ENCODE measurements at regions of chr13 and their contacts with region 1.

Region 1: GRCh38 chr13:112641456-112642089 is 48.3 kb upstream of the ATP11A start:
- DNase-seq: no peak
- H3K4me3 ChIP-seq: no peak overlapping the region
- H3K27ac ChIP-seq: no peak overlapping the region
- H3K4me1 ChIP-seq: peaks cover 0 to 6% of the 10 kb centered on the region in 2 donors
- H3K27me3 ChIP-seq: no peaks in the 10 kb centered on the region
- CTCF ChIP-seq: no peak
- POLR2A ChIP-seq: no peak

Region 2: DNA sequence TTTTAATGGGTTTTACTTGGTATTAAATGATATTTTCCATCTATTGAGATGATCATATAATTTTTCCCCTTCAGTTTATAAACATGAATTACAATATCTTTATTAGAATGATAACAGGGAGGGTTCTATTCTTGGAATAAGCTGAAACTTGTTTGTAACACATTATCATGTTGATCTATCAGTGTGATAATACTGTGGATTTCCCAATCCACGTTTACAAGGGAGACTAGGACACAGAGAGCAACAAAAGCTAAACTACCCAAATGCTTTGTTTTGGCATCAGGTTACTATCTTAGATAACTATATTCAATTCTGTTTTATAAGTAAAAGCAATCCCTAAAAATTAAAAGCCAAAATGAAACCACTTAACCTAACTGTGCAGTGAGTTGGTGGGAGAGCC is 146.1 kb before region 1 on chr13:
- intact Hi-C with region 1: no loop called
- DNase-seq: no peak
- H3K4me3 ChIP-seq: no peak overlapping the region
- H3K27ac ChIP-seq: no peak overlapping the region
- H3K4me1 ChIP-seq: no peaks in the 10 kb centered on the region
- H3K27me3 ChIP-seq: no peaks in the 10 kb centered on the region
- CTCF ChIP-seq: no peak
- POLR2A ChIP-seq: no peak

Region 3: DNA sequence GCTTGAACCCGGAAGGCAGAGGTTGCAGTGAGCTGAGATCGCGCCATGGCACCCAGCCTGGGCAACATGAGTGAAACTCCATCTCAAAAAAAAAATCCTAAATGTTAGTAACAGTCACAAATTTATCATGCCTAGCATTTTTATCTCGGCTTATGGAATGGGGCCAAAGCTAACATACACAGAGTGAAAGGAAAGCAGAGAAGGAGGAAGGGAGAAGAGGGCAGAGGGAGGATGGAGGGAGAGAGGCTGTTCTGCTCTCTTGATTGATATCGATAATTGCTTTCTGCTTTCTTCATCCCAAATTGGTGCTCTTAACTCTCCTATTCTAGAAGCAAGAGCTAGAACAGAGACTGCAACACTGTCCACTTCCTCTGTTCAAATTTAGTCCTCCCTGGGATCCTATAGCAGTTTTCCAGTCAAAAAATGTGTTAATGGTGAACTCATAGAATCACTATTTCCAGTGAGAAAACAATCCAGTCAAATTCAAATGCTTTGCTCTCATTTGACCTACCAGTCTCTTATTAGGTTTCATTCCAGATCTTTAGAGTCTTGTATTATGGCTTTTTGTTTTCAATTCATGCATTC is 37.8 kb before region 1 on chr13:
- intact Hi-C with region 1: no loop called
- DNase-seq: no peak
- H3K4me3 ChIP-seq: no peak overlapping the region
- H3K27ac ChIP-seq: no peak overlapping the region
- H3K4me1 ChIP-seq: peaks cover 0 to 5% of the 10 kb centered on the region in 2 donors
- H3K27me3 ChIP-seq: no peaks in the 10 kb centered on the region
- CTCF ChIP-seq: no peak
- POLR2A ChIP-seq: no peak

Region 4: GRCh38 chr13:112685891-112686290 is 44.3 kb after region 1 on chr13:
- intact Hi-C with region 1: no loop called
- DNase-seq: no peak
- H3K4me3 ChIP-seq: no peak overlapping the region
- H3K27ac ChIP-seq: no peak overlapping the region
- H3K4me1 ChIP-seq: peaks cover 8 to 19% of the 10 kb centered on the region in 2 donors
- H3K27me3 ChIP-seq: no peaks in the 10 kb centered on the region
- CTCF ChIP-seq: no peak
- POLR2A ChIP-seq: no peak

Region 5: DNA sequence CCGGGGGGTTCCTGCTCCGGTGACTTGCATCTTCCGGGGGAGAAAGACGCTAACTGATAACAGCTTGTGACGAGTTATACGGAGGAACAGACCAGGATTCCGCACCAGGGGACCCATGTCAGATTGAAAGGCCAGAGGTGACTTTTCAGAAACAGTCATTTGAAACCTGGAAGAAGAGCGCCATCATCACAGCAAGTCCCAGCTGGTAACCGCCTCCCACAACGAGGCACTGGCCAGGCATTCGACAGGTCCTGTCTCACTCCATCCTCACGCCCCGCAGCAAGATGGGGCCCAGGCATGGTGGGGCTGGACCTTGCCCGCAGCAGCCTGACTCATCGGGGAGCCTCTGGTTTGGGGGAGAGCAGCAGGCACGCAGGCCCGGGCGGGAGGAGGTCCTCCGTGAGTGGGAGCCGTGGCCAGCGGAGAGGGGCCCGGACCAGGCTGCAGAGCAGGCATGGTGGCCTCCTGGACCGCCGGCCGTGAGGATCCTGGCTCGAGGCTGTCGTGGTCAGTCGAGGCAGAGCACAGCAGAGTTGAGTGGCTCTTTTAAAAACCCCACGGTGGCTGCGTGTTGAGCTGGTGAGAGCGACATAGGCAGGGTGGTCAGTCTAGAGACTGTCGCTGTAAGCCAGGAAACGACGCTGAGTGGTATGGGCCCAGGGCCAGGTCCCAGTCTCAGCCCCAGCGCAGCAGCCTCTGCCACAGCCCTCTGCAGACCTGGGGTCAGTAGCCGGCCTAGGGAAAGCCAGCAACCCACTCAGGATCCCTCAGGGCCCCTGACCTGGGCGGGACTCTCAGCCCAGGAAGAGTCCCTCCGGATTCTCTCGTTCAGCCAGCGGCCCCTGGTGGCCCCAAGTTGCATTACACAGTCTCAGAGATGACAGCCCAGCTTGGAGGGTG is 232.5 kb after region 1 on chr13:
- intact Hi-C with region 1: loop called (anchors 2 kb)
- DNase-seq: peak; percentile 78 to 82
- H3K4me3 ChIP-seq: no peak overlapping the region
- H3K27ac ChIP-seq: peak overlapping the region in 1 of 3 donors; percentile 36
- H3K4me1 ChIP-seq: peaks cover 0 to 4% of the 10 kb centered on the region in 2 donors
- H3K27me3 ChIP-seq: no peaks in the 10 kb centered on the region
- CTCF ChIP-seq: peak; percentile 87 to 95 (median 94)
- POLR2A ChIP-seq: no peak